ENCODE measurements at regions of chr14 and their contacts with region 1.

Region 1: DNA sequence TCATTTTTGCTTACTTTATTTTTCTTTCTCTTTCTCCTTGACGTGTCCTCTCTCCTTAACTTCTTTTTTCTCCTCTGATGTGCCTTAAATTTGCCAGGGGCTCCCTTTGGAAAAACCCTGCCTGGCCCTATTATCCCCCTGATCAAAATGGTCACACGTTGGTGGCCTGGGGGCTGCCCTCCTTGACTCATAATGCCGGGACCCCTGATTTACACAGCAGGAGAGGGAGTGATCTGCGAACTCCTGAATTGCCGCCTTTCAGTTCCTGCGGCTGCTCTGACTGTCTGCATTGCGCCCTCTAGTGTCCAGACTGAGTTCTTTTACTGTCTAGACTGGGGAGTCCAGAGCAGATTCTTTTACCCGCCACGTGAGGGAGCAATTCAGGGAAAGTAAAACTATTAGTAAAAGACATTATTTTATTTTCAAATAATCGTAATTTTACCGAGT is 44.8 kb upstream of the GZMB start:
- DNase-seq: peak; percentile 39
- H3K4me3 ChIP-seq: peak overlapping the region in 3 of 4 donors; percentile 16 to 59 (median 33)
- H3K27ac ChIP-seq: no peak overlapping the region
- H3K4me1 ChIP-seq: peaks cover 0 to 46% (median 23%) of the 10 kb centered on the region in 3 donors
- H3K27me3 ChIP-seq: peaks cover 0 to 8% (median 0%) of the 10 kb centered on the region in 4 donors
- CTCF ChIP-seq: peak; percentile 89 to 96 (median 92)
- POLR2A ChIP-seq: no peak

Region 2: DNA sequence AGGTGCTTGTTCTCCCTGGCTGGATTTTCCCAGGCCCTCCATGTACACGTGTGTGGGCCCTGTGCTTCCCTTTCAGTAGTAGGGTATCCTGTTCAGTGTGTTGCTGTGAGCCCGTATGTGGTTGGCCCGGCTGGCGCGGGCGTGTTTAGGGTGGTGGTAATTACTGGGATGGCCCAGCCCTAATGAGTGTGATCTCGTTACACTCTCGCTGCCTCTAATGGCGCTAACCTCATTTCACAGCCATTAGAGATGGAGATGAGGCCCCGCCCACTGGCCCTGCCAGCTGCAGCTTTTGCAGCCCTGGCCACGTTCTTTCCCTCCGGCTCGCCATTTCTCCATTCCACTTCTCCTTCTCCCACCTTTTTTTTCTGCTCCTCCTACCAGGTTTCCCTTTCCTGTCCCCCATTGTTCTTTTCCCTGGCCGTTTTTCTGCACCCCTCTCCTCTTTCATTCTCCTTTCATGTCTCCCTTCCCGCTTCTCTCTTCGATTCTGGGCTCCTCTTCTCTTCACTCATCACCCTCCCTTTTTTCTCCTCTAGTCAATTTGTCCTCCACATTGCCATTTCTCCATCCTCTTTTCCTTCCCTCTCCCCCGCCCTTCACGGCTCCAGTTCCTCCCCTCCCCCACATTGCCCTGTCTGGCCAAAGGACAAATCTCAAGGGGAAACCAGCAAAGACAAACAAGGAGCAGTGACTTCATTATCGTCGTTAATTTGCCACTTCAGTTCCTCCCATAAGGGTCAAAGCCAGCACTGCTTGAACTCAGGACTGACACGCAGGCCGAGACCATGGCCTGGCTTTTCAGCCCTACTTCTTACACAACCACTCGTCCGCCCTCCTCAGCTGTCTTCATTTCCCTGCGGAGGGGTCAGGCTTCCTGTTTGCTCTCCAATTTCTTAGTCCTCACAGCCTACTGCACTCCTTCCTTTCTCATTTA is 1134.0 kb before region 1 on chr14:
- intact Hi-C with region 1: no loop called
- DNase-seq: no peak
- H3K4me3 ChIP-seq: no peak overlapping the region
- H3K27ac ChIP-seq: no peak overlapping the region
- H3K4me1 ChIP-seq: peaks cover 0 to 5% (median 0%) of the 10 kb centered on the region in 3 donors
- H3K27me3 ChIP-seq: peaks cover 0 to 7% (median 0%) of the 10 kb centered on the region in 4 donors
- CTCF ChIP-seq: no peak
- POLR2A ChIP-seq: no peak

Region 3: GRCh38 chr14:24605435-24606190 is 73.2 kb before region 1 on chr14:
- intact Hi-C with region 1: loop called (anchors 10 kb)
- DNase-seq: no peak
- H3K4me3 ChIP-seq: no peak overlapping the region
- H3K27ac ChIP-seq: no peak overlapping the region
- H3K4me1 ChIP-seq: no peaks in the 10 kb centered on the region
- H3K27me3 ChIP-seq: no peaks in the 10 kb centered on the region
- CTCF ChIP-seq: peak; percentile 59 to 76 (median 68)
- POLR2A ChIP-seq: no peak

Region 4: GRCh38 chr14:24837280-24838046 is 158.6 kb after region 1 on chr14:
- intact Hi-C with region 1: no loop called
- DNase-seq: no peak
- H3K4me3 ChIP-seq: no peak overlapping the region
- H3K27ac ChIP-seq: no peak overlapping the region
- H3K4me1 ChIP-seq: no peaks in the 10 kb centered on the region
- H3K27me3 ChIP-seq: no peaks in the 10 kb centered on the region
- CTCF ChIP-seq: no peak
- POLR2A ChIP-seq: no peak

Region 5: DNA sequence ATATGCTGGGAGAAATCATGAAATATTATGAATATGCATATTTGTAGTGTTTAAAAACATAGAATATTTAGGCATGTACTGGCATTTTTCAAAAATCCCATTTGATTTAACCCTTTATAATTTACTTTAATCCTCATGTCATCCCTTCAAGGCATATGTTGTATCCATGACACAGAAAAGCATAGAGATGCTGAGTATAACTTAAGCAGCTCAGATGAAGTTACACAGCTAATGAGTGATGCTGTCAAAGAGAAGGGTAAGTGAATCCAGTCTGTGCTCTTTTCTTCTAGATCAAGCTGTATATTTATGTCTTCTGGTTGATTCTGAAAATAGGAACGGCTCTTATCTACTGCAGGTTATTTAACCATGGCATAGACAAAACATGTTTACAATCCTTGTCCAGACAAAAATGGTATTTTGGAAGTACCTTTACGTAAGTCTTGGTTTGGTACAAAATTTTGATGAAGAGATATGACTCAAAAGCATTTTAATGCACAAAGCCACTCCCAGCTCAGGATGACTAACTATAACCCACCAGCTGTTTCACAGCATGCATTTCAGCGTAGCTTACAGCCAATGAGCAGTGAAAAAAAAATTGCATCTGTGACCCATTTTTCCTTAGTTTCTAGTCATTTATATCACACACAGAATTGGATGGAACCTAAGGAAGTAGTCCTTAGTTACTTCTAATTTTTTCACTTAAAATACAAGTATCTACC is 169.4 kb after region 1 on chr14:
- intact Hi-C with region 1: no loop called
- DNase-seq: no peak
- H3K4me3 ChIP-seq: no peak overlapping the region
- H3K27ac ChIP-seq: no peak overlapping the region
- H3K4me1 ChIP-seq: no peaks in the 10 kb centered on the region
- H3K27me3 ChIP-seq: no peaks in the 10 kb centered on the region
- CTCF ChIP-seq: no peak
- POLR2A ChIP-seq: no peak

Measured in esophagus squamous epithelium (tissue), 5 donors.